ENCODE measurements at regions of chr17 and their contacts with region 1.

Region 1: GRCh38 chr17:75393523-75394331 is 11.8 kb downstream of the GRB2 start:
- DNase-seq: peak; percentile 93
- H3K4me3 ChIP-seq: peak overlapping the region; percentile 72
- CTCF ChIP-seq: no peak

Region 2: DNA sequence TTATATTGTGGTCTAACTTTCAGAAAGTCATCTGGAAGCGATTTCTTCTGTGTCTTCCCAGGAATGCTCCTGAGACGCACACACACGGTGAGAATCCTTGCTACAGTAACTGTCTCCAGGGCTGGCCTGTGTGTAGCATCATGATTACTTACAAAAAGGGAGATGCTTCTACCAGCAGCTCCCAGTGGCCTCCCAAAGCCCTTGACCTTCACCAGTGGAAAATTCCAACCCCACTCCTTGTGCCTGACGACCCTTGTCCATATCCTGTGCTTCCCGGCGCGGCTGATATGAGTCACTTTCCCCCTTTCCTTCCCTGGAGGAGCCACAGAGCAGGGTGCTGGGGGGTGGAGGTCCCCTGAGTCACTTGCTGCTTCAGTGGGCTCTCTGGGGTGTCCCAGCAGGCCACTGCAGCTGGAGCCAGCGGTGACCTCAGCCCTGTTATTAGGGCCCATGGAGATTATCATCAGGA is 595.5 kb before region 1 on chr17:
- in situ Hi-C with region 1: no loop called
- DNase-seq: no peak
- H3K4me3 ChIP-seq: no peak overlapping the region
- CTCF ChIP-seq: no peak

Region 3: DNA sequence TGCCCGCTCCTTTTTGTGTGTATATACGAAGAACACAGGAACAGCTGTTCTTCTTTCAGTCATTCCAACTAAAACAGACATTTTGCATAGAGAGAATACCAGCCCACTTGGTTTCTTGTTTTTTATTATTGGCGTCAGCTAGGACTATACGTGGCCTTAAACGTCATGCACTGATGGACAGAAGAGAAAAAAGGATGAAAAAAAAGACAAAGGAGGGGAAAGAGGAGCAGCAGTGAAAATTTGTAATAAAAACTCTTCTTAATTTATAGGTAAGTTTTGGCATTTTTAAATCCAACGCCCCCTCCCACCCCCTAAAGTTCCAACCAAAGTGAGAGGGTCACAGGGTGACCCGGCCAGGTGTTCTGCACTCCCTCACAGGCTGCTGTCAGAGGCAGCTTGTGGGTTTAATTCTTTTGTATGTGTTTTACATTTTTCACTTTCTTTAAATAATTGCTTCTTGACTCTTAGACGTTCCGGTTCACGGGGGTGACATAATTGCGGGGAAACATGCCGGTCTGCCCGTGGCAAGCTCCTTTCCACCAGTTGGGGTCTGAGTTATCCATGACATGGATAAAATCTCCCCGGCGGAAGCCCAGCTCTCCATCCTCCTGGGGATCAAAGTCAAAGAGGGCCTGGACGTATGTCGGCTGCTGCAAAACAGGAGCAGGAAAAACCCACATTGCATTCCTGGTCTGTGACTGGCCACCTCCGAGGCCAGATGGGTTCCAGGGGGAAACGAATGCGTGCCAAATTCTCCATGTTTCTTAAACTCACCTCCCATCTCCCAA is 73.6 kb before region 1 on chr17:
- in situ Hi-C with region 1: loop called (anchors 5 kb)
- DNase-seq: peak; percentile 81
- H3K4me3 ChIP-seq: no peak overlapping the region
- CTCF ChIP-seq: no peak

Region 4: GRCh38 chr17:75345514-75346167 is 48.1 kb before region 1 on chr17:
- in situ Hi-C with region 1: no loop called
- DNase-seq: no peak
- H3K4me3 ChIP-seq: no peak overlapping the region
- CTCF ChIP-seq: no peak

Region 5: DNA sequence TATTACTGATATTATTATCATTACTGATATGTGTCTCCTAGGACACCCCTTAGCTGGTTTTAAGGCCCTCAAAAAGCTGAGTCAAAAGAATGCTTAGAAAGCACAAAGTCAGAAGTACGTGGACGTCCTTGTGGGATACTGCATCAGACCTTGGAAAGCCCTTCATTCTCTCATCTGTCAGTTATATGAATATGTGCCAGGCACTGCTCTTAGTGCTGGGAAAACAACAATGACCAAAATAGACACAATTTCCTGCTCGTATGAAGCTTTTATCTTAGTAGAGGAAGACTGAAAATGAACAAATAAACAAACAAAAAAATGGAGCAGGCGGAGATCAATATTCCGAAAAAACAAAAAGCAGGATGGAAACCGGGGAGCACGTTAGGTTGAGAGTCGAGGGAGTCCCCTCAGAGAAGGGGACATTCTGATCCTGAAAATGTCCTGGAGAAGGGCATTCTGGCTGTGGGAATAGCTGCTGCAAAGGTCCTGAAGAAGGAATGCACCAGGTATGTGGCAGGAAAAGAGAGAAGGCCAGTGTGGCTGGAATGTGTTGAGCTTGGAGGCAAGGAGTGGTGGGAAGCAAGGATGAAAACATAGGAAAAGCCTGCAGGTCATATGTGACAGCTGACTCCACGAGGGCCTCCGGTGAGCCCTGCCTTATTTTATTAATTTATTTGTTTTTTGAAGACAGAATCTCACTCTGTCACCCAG is 47.2 kb after region 1 on chr17:
- in situ Hi-C with region 1: no loop called
- DNase-seq: no peak
- H3K4me3 ChIP-seq: no peak overlapping the region
- CTCF ChIP-seq: no peak